Posterior cingulate gyrus (tissue), 11 donors: ENCODE measurements at regions of chr14 and their contacts with region 1.

Region 1: DNA sequence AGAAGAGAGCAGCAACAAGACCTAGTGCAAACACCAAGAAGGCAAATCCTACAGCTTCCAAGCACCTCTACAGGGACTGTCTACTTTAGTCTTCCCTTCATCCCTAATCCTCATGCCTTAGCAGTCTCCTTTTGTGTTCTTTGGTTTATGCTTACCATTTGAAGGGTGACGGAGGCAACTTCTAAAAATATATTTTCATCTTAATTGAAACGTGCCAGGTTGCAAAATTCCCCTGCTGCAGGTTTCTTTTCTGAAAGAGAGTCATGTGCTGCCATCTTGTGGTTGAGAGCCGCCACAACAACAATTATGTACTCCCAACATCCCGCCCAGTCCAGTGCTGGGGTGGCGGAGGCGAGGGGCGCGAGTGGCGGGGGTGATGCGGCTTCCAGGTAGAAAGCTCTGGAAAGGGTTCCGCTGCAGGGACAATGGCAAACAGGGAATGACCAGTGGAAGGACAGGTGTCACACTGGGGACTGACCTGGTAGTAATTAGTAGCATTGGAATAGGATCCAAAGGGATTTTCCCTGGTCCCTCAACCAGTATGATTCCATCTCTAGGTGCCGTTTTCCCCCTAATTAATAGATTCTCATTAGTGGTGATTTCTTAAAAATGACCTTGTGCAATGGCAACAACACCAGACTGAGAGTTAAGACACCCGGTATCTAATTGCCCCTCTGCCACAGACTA is 80.3 kb upstream of the GNG2 start:
- DNase-seq: peak in 9 of 10 donors; percentile 31 to 91 (median 72)

Region 2: DNA sequence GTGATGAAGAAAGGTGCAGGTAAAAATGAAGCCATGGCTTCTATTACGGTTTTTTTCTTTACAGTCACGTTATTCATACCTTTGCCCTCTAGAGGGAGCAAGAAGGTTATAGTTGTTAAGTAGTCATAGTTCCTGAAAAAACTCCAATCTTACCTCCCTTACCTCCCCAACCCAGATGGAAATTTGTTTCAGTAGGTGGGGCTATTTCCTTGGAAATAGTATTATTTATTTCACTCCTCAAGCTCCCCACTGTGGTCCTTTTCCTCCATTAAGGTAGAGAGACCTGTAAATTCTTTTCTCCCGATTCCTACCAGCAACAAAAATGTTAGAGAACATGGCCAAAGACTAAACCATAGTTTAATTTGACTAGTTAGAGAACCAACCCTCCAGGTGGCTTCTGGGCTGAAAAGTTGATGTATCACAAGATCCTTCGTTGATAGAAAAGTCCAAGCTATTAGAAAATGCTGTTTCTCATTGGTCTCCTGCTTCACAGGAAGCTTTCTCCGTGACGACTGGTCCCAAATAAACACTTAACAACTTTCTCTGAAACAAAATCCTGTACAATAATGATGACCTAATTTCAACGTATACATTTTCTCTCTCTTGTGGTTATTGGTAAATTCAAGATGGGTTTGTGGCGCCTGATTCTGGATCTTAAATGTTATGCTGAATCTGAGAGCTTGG is 496.6 kb before region 1 on chr14:
- intact Hi-C with region 1: loop called (anchors 1 kb)
- DNase-seq: no peak

Region 3: GRCh38 chr14:51657762-51658161 is 122.4 kb before region 1 on chr14:
- intact Hi-C with region 1: loop called (anchors 5 kb)
- DNase-seq: no peak

Region 4: GRCh38 chr14:51979088-51979709 is 199.1 kb after region 1 on chr14:
- intact Hi-C with region 1: loop called (anchors 5 kb)
- DNase-seq: peak; percentile 62 to 97 (median 88)